B cell (primary cell): ENCODE measurements at regions of chr6 and their contacts with region 1.

Region 1: GRCh38 chr6:10395171-10395941 is 19.5 kb downstream of the TFAP2A start:
- DNase-seq: no peak
- ATAC-seq: no peak
- H3K4me3 ChIP-seq: no peak overlapping the region
- H3K4me3 Mint-ChIP-seq: no peak overlapping the region
- H3K27ac ChIP-seq: no peak overlapping the region
- H3K27ac Mint-ChIP-seq: no peak overlapping the region
- H3K4me1 ChIP-seq: peaks cover 0 to 1% of the 10 kb centered on the region in 2 donors
- H3K4me1 Mint-ChIP-seq: no peaks in the 10 kb centered on the region
- H3K27me3 ChIP-seq: peaks cover 3 to 92% (median 68%) of the 10 kb centered on the region in 4 experiments
- H3K27me3 Mint-ChIP-seq: peaks cover 88% of the 10 kb centered on the region
- CTCF ChIP-seq: no peak

Region 2: DNA sequence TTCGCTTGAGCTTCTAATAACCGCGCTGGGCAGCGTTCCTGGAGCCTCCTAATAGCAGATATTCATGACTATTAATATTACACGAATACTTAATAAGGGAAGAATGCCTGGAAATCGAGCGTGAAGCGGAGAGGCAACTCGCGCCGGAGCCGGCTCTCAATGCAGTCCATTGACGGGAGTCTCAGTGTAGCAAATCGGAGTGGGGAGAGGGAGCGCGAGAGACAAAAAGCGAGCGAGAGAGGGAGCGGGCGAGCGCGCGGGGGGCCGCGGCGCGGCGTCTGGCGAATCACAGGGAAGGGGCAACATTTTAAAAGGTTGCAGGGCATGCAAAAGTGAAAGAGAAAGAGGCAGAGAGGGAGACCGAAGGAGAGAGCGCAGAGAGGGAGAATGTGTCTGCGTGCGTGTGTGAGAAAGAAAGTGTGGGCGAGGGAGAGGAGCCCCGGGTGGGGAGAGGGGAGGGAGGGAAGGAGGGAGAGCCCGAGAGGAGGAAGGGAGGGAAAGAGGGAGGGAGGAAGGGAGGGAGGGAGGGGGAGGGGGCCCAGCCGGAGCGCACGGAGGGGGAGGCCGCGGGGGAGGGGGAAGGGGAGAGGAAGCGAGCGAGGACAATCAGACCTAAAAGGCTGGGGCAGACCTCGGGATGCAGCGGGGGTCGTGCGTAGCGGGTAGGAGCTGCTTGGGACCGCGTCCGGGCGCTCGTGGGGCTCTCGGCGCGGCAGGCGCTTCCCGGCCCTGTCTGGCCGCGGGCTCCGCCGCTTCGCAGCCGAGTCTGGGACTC is 16.8 kb after region 1 on chr6:
- CTCF ChIA-PET with region 1: interaction called, 3 read pairs
- POLR2A ChIA-PET with region 1: no interaction called
- intact Hi-C with region 1: loop called (anchors 2 kb)
- DNase-seq: peak; percentile 69
- ATAC-seq: peak; percentile 62
- H3K4me3 ChIP-seq: peak overlapping the region; percentile 44 to 86 (median 70)
- H3K4me3 Mint-ChIP-seq: peak overlapping the region; percentile 96
- H3K27ac ChIP-seq: no peak overlapping the region
- H3K27ac Mint-ChIP-seq: peak overlapping the region; percentile 54
- H3K4me1 ChIP-seq: peaks cover 35 to 44% of the 10 kb centered on the region in 2 donors
- H3K4me1 Mint-ChIP-seq: peaks cover 28% of the 10 kb centered on the region
- H3K27me3 ChIP-seq: peaks cover 2 to 84% (median 71%) of the 10 kb centered on the region in 4 experiments
- H3K27me3 Mint-ChIP-seq: peaks cover 80% of the 10 kb centered on the region
- CTCF ChIP-seq: no peak